ENCODE measurements at regions of chr12 and their contacts with region 1.

Region 1: DNA sequence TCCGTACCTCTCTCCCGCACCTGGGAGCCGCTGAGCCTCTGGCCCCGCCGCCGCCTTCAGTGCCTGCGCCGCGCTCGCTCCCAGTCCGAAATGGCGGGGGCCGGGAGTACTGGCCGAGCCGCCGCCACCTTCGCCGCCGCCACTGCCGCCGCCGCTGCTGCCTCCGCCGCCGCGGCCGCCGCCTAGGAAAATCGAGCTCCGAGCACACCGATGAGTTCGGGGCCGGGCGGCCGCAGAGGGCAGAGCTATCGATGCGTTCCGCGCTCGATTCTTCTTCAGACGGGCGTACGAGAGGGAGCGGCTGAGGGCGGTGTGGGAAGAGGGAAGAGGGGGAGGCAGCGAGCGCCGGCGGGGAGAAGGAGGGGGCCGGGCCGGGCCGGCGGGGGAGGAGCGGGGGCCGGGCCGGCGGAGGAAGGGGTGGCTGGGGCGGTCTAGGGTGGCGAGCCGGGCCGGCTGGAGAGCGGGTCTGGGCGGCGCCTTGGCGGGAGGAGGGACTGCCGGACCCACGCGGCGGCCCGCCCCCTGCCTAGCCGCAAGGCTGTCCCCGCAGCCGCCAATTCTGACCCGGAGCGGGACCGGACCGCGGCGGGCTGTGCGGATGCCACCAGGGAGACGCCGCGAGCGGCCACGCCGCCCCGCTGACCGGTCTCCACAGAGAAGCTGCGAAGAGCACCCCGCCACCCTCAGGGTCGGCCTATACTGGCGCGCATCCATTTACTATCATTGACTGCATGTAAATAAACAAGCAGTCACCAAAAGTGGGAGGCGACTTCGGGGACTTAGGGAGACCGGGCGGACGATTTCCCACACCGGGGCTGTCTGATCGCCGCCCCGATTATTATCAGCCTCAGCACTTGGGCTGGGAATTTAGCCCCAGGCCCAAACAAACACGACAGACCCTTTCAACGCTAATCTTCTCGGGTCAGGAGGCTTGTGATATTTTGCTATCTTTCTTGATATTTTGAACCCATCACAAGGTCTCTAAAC is at the start of gene KRAS:
- DNase-seq: peak; percentile 82 to 98
- H3K4me3 ChIP-seq: peak within 1 kb of the TSS; percentile 93
- H3K27ac ChIP-seq: peak within 1 kb of the TSS; percentile 94 to 96
- H3K4me1 ChIP-seq: peaks cover 2 to 4% of the 10 kb centered on the region in 2 donors
- H3K27me3 ChIP-seq: no peaks in the 10 kb centered on the region
- CTCF ChIP-seq: no peak
- total RNA-seq, gene KRAS: 9.8 TPM

Region 2: GRCh38 chr12:25184132-25184531 is 66.9 kb before region 1 on chr12:
- intact Hi-C with region 1: no loop called
- DNase-seq: no peak
- H3K4me3 ChIP-seq: no peak overlapping the region
- H3K27ac ChIP-seq: no peak overlapping the region
- H3K4me1 ChIP-seq: no peaks in the 10 kb centered on the region
- H3K27me3 ChIP-seq: no peaks in the 10 kb centered on the region
- CTCF ChIP-seq: no peak

Region 3: DNA sequence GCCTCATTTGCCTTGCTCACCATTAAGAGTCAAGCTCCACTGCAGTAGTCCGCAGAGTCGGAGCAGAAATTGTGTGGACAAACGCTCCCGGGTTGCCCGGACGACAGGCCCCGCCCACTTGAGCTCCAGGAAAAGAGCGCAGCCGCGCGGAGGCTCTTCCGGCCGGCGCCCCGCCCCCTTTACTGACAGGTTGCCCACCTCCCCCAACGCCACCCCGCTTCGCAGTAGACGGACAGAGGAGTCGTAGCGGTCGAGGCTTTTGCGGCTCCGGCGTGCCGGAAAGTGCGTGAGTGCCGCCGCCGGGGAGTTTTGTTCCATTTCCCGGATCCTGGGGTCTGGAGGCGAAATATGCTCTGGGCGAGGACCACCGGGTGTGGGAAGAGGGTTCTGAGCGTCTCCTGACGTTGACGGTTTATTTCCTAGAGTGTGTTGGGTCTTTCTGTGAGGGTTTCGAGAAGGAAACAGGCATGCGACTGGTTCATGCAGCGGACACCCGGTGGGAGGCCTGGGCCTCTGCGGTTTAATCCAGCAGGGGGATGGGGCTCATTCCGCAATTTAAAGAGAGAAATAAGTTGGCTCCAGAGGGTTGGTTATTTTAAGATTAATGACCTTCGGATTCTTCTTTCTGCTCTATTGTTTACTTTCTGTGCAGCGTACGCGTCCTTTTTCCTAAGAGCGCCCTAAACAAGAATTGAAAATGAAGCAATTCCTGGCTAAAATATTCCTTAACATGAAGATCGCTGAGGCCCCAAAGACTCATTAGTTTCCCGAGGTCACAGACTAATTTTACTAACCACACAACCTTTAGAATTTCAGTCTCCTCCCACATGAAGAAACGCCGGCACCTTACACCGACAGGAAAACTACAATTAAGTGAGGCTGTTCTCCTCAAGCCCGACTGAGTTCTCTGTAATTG is 55.7 kb before region 1 on chr12 and contains the starts of genes DNAI7 and ETFRF1:
- intact Hi-C with region 1: loop called (anchors 1 kb)
- DNase-seq: peak; percentile 90 to 99
- H3K4me3 ChIP-seq: peak within 1 kb of the TSS; percentile 84 to 85
- H3K27ac ChIP-seq: peak within 1 kb of the TSS; percentile 97
- H3K4me1 ChIP-seq: peaks cover 3 to 9% of the 10 kb centered on the region in 2 donors
- H3K27me3 ChIP-seq: no peaks in the 10 kb centered on the region
- CTCF ChIP-seq: peak in 1 of 3 experiments; percentile 9
- total RNA-seq, gene DNAI7: not detected
- total RNA-seq, gene ETFRF1: 0.85 TPM

Region 4: DNA sequence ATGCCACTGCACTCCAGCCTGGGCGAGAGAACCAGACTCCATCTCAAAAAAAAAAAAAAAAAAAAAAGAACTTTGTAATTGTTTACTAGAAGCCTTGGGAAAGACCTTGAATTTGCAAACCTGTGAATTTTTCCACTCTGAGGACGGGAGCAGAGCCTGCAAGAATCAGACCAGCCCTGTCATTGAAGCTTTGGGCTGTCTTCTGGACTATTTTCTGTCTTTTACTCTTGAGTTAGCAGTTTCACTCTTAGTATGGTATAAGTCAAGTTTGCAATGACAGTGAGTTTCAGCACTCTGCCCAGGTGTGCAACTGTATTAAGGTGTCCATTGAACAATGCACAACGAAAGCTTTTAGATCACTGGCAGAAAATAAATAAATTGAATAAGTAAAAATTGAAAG is 81.1 kb after region 1 on chr12:
- intact Hi-C with region 1: loop called (anchors 2 kb)
- DNase-seq: no peak
- H3K4me3 ChIP-seq: no peak overlapping the region
- H3K27ac ChIP-seq: no peak overlapping the region
- H3K4me1 ChIP-seq: no peaks in the 10 kb centered on the region
- H3K27me3 ChIP-seq: no peaks in the 10 kb centered on the region
- CTCF ChIP-seq: no peak

Region 5: DNA sequence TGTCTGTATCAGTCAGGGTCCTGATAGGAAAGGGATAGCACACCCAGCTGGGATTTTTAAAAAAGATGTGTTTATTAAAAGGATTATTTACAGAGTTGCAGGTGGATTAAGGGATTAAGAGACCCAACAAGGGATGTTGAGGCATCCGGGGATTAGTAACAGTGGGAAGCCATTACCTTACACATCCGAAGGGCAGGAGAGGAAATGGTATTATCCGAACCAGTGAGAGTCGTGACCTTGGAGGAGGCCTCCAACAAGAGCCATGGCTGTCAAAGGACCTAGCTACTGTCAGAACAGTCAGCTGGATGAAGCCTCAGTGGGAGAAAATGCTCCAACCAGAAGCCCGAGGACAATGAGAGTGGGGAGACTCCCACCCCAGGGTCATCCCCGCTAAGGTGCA is 146.0 kb after region 1 on chr12:
- intact Hi-C with region 1: no loop called
- DNase-seq: no peak
- H3K4me3 ChIP-seq: no peak overlapping the region
- H3K27ac ChIP-seq: no peak overlapping the region
- H3K4me1 ChIP-seq: no peaks in the 10 kb centered on the region
- H3K27me3 ChIP-seq: no peaks in the 10 kb centered on the region
- CTCF ChIP-seq: no peak

Region 6: GRCh38 chr12:26028953-26029735 is 778.1 kb after region 1 on chr12:
- intact Hi-C with region 1: loop called (anchors 10 kb)
- DNase-seq: no peak
- H3K4me3 ChIP-seq: peak overlapping the region in 1 of 2 donors; percentile 6
- H3K27ac ChIP-seq: peak overlapping the region in 1 of 2 donors; percentile 32
- H3K4me1 ChIP-seq: peaks cover 0 to 49% of the 10 kb centered on the region in 2 donors
- H3K27me3 ChIP-seq: no peaks in the 10 kb centered on the region
- CTCF ChIP-seq: peak; percentile 47 to 76 (median 70)

Region 7: DNA sequence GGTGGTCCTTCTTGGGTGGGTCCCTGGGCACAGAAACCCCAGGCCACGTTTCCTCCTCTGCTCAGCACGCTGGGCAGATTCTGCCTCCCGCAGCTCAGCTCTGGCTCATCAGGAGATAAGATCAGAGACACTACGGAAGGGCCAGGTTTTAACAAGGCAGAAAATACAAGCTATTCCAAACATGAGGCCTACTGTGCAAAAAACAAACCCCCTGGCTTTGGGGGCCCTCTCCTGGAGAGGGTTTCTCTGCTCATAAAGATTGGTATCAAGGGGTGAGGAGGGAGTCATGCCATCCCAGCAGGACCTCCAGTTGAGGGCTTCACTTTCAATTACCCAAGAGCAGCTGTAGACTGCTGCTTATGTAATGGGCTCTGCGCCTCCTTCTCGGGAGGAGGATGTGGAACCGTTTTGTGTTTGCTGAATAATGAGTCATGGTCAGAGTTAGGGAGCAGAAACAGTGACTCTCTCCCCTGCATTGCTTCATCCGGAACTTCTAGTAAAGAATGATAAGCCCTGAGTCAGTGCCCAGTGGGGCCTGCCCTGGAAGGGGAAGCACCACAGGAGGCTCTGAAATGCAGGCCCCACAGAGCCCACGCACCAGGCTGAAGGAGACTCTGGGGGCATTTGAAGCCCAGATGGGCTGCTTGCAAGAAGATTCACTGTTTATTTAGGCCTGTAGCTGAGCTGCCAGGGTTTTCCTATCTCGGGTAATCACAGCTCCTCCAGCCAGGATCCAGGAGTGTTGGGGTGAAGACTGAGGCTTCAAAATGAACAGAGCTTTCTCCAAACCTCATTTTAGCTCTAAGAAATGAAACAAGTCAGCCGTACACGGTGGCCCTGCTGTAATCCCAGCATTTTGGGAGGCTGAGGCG is 1023.6 kb after region 1 on chr12:
- intact Hi-C with region 1: loop called (anchors 10 kb)
- DNase-seq: peak; percentile 78 to 96
- H3K4me3 ChIP-seq: no peak overlapping the region
- H3K27ac ChIP-seq: peak overlapping the region; percentile 80 to 84
- H3K4me1 ChIP-seq: peaks cover 6 to 30% of the 10 kb centered on the region in 2 donors
- H3K27me3 ChIP-seq: no peaks in the 10 kb centered on the region
- CTCF ChIP-seq: no peak